ENCODE measurements at regions of chr20 and their contacts with region 1.

Region 1: GRCh38 chr20:5557123-5557522 is 193.1 kb upstream of the SHLD1 start:
- DNase-seq: peak; percentile 69
- ATAC-seq: peak; percentile 85
- H3K4me3 Mint-ChIP-seq: no peak overlapping the region
- H3K27ac Mint-ChIP-seq: no peak overlapping the region
- H3K4me1 Mint-ChIP-seq: peaks cover 8% of the 10 kb centered on the region
- H3K27me3 Mint-ChIP-seq: no peaks in the 10 kb centered on the region
- CTCF ChIP-seq: peak; percentile 49

Region 2: DNA sequence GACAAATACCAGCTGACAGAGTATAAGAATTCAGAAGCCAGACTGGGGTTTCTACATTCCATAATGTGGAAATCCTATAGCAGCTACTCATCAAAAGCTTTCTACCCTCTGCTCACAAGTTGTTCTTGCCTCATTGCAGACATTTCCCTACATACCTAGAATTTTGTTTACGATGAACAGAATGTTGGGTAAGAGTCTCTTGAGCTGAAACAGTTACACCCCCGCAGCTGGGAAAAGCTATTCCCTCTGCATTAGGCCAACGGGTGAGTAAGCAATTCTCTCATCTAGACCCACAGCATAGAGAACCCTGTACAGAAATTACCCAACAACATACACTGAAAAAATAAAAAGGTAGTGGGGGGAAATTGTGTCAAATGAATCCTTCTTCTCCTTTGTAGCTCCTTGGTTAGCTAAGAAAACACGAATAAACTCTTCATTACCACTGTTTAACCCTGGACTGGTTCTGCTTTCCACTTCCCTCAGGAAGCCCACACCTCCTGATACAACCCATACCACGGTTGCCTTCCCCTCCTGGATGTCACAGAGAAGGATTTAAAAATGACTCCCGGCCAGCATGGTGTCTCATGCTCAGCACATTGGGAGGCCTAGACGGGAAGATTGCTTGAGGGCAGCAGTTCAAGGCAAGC is 21.9 kb before region 1 on chr20:
- CTCF ChIA-PET with region 1: interaction called, 22 read pairs
- POLR2A ChIA-PET with region 1: no interaction called
- DNase-seq: no peak
- ATAC-seq: no peak
- H3K4me3 Mint-ChIP-seq: no peak overlapping the region
- H3K27ac Mint-ChIP-seq: no peak overlapping the region
- H3K4me1 Mint-ChIP-seq: no peaks in the 10 kb centered on the region
- H3K27me3 Mint-ChIP-seq: no peaks in the 10 kb centered on the region; the same call in 1 of the 2 replicates
- CTCF ChIP-seq: no peak

Region 3: GRCh38 chr20:5569021-5569420 is 11.9 kb after region 1 on chr20:
- CTCF ChIA-PET with region 1: interaction called, 27 read pairs
- POLR2A ChIA-PET with region 1: no interaction called
- DNase-seq: no peak
- ATAC-seq: no peak
- H3K4me3 Mint-ChIP-seq: no peak overlapping the region
- H3K27ac Mint-ChIP-seq: no peak overlapping the region
- H3K4me1 Mint-ChIP-seq: peaks cover 8% of the 10 kb centered on the region
- H3K27me3 Mint-ChIP-seq: no peaks in the 10 kb centered on the region
- CTCF ChIP-seq: no peak

Region 4: DNA sequence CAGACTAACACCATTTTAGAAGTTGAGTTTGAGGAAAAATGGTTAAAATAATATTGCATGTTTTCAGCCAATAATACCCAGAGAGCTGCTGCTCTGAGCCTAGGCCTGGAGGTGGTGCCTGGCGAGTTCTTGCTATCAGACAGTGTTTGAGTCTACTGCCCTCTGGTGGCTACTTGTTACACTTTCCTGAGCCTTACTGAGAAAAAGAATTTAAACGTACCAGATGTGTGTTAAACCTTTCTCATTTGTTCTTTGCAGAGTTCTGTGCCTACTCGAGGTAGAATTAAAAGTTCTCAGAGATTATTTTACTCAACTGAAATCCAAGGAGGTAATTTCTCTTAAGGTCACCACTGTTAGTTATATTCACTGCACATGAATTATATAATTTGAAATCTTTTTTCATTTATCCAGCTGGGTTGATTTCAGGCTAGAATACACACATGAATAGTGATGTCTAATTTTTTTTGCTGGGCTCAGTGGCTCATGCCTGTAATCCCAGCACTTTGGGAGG is 231.3 kb after region 1 on chr20:
- CTCF ChIA-PET with region 1: interaction called, 53 read pairs
- POLR2A ChIA-PET with region 1: no interaction called
- DNase-seq: peak; percentile 67
- ATAC-seq: peak; percentile 96
- H3K4me3 Mint-ChIP-seq: no peak overlapping the region
- H3K27ac Mint-ChIP-seq: no peak overlapping the region
- H3K4me1 Mint-ChIP-seq: peaks cover 9% of the 10 kb centered on the region
- H3K27me3 Mint-ChIP-seq: no peaks in the 10 kb centered on the region
- CTCF ChIP-seq: peak; percentile 82

Measured in WTC11 (cell line).